Caco-2 (cell line): ENCODE measurements at regions of chr1 and their contacts with region 1.

Region 1: GRCh38 chr1:197614916-197615692 is 160.2 kb downstream of the DENND1B start:
- DNase-seq: peak; percentile 36 to 44
- H3K4me3 ChIP-seq: no peak overlapping the region
- H3K4me3 Mint-ChIP-seq: no peak overlapping the region
- H3K27ac Mint-ChIP-seq: no peak overlapping the region
- H3K4me1 ChIP-seq: no peaks in the 10 kb centered on the region; the same call in 1 of the 2 replicates
- H3K4me1 Mint-ChIP-seq: no peaks in the 10 kb centered on the region
- H3K27me3 ChIP-seq: no peaks in the 10 kb centered on the region
- H3K27me3 Mint-ChIP-seq: no peaks in the 10 kb centered on the region
- CTCF ChIP-seq: peak; percentile 56 to 77

Region 2: GRCh38 chr1:197521118-197521739 is 93.9 kb before region 1 on chr1:
- CTCF ChIA-PET with region 1: no interaction called
- POLR2A ChIA-PET with region 1: no interaction called
- intact Hi-C with region 1: loop called (anchors 2 kb)
- DNase-seq: peak in 1 of 2 experiments; percentile 47
- H3K4me3 ChIP-seq: no peak overlapping the region
- H3K4me3 Mint-ChIP-seq: no peak overlapping the region
- H3K27ac Mint-ChIP-seq: no peak overlapping the region
- H3K4me1 ChIP-seq: no peaks in the 10 kb centered on the region
- H3K4me1 Mint-ChIP-seq: no peaks in the 10 kb centered on the region
- H3K27me3 ChIP-seq: no peaks in the 10 kb centered on the region
- H3K27me3 Mint-ChIP-seq: no peaks in the 10 kb centered on the region
- CTCF ChIP-seq: peak; percentile 64 to 70

Region 3: GRCh38 chr1:197868751-197869489 is 253.8 kb after region 1 on chr1:
- CTCF ChIA-PET with region 1: interaction called, 8 read pairs
- POLR2A ChIA-PET with region 1: no interaction called
- intact Hi-C with region 1: loop called (anchors 1 kb)
- DNase-seq: peak; percentile 36 to 45
- H3K4me3 ChIP-seq: no peak overlapping the region
- H3K4me3 Mint-ChIP-seq: no peak overlapping the region
- H3K27ac Mint-ChIP-seq: no peak overlapping the region
- H3K4me1 ChIP-seq: no peaks in the 10 kb centered on the region
- H3K4me1 Mint-ChIP-seq: peaks cover 8% of the 10 kb centered on the region
- H3K27me3 ChIP-seq: no peaks in the 10 kb centered on the region
- H3K27me3 Mint-ChIP-seq: peaks cover 6% of the 10 kb centered on the region
- CTCF ChIP-seq: peak; percentile 44 to 55

Region 4: DNA sequence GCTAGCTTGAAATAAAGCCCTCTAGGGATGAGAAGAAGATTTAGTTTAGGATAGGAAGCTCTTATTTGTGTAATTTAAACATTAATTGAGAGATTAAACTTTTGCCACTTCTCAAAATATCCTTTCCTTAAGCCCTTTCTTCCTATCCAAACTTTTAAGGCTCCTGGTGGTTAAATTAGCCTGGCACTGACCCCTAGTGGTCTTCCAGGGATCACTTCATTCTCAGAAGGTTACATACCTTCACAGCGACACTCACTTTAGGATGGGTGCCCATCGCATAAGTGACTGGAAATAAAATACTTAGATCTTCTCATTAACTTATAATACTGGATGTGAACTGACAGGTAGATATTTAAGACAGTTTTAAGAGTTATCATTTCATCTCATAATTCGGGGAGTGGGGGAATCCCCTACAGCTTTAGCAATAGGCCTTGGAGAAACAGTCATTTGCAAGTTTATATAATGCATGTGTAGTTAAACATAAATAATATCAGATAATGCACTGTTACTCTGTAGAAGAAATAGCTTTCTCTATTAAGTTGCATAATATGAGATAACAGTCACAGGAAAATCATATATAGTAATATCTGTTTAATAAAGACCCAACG is 309.5 kb after region 1 on chr1:
- CTCF ChIA-PET with region 1: no interaction called
- POLR2A ChIA-PET with region 1: no interaction called
- intact Hi-C with region 1: loop called (anchors 1 kb)
- DNase-seq: peak in 1 of 2 experiments; percentile 55
- H3K4me3 ChIP-seq: no peak overlapping the region
- H3K4me3 Mint-ChIP-seq: no peak overlapping the region
- H3K27ac Mint-ChIP-seq: no peak overlapping the region
- H3K4me1 ChIP-seq: no peaks in the 10 kb centered on the region
- H3K4me1 Mint-ChIP-seq: no peaks in the 10 kb centered on the region
- H3K27me3 ChIP-seq: no peaks in the 10 kb centered on the region
- H3K27me3 Mint-ChIP-seq: peaks cover 7% of the 10 kb centered on the region
- CTCF ChIP-seq: peak; percentile 71 to 82

Region 5: DNA sequence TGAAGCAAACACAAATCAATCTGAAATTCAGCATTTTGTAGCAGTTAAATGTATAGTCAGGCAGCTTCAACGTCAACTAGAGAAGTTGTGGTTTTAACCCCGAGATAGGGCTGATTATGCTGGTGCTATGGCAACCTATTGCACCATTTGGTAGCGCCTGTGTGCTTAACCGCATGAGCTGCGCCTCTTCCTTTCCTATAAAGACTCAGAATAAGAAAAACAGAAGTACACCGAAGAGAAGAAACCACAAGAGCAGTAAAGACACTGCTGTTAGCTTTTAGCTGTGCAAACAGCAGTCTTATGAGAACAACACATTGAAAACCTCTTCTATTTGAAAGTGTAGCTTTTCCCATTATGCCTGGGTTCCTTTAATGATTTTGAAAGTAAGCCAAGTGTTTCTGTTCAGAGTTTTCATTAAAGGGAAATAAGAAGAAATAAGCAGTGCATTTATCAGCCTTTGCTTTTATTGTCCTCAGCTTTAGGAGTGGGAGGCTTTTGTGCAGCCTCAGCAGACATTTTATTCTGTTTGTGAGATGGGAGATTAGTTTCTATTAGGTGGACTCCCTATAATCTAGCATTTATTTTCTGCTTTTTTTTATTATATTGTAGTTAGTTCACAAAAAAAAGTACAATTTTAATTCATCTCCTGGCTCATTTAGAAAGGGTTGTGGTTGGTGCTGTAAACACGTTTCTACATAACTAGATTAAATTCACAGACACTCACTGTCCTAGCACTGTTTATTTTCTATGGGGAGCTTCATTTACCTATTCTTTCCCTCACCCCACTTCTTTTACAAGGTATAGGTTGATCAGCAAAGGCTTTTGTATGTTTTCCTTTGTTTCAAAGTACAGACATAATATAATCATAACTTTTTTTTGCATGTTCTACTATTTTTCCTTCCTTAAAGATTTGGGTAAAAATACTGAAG is 1067.0 kb after region 1 on chr1:
- CTCF ChIA-PET with region 1: no interaction called
- POLR2A ChIA-PET with region 1: no interaction called
- intact Hi-C with region 1: loop called (anchors 5 kb)
- DNase-seq: peak in 1 of 2 experiments; percentile 8
- H3K4me3 ChIP-seq: no peak overlapping the region
- H3K4me3 Mint-ChIP-seq: no peak overlapping the region
- H3K27ac Mint-ChIP-seq: no peak overlapping the region
- H3K4me1 ChIP-seq: no peaks in the 10 kb centered on the region
- H3K4me1 Mint-ChIP-seq: no peaks in the 10 kb centered on the region
- H3K27me3 ChIP-seq: no peaks in the 10 kb centered on the region
- H3K27me3 Mint-ChIP-seq: no peaks in the 10 kb centered on the region
- CTCF ChIP-seq: no peak